AG04450 (cell line): ENCODE measurements at regions of chrX and their contacts with region 1.

Region 1: GRCh38 chrX:100768679-100769338 is 36.9 kb upstream of the SYTL4 start:
- DNase-seq: peak; percentile 10
- H3K4me3 ChIP-seq: no peak overlapping the region
- H3K27ac ChIP-seq: no peak overlapping the region
- H3K27me3 ChIP-seq: no peaks in the 10 kb centered on the region
- CTCF ChIP-seq: peak; percentile 99

Region 2: GRCh38 chrX:100512471-100512870 is 256.3 kb before region 1 on chrX:
- CTCF ChIA-PET with region 1: interaction called, 61 read pairs
- POLR2A ChIA-PET with region 1: no interaction called
- DNase-seq: no peak
- H3K4me3 ChIP-seq: no peak overlapping the region
- H3K27ac ChIP-seq: no peak overlapping the region
- H3K27me3 ChIP-seq: no peaks in the 10 kb centered on the region
- CTCF ChIP-seq: peak; percentile 49

Region 3: DNA sequence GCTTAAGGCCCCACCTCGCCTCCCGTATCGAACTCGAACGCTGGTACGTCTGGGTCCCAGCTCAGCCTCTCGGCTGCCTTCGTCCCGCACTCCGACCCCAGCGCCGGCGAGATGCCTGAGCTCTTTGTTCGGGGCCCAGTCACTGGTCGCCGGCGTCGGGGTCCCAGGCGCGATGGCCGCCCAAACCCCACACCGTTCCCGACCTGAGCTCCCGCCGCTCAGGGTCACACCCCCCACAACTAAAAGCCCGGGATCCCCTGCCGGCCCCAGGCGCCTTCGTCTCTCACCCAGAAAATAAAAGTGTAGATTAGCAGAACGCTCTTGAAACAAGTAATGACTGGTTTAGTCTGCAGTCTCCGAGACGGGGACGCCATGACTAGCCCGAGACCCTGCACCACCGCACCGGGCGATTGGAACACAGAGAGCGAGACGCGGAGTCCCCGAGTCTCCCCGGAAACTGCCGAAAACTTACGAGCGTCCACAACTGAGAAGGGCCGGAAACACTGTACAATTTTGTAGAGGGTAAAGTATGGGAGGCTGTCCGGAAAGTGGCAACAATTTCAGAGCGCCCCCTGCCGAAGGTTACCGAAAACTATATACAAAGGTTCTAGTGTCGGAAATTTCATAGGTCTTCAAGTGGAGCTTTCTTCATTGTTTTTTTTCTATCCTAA is 132.4 kb before region 1 on chrX and contains the start of gene TSPAN6:
- CTCF ChIA-PET with region 1: interaction called, 13 read pairs
- POLR2A ChIA-PET with region 1: no interaction called
- DNase-seq: peak; percentile 57
- H3K4me3 ChIP-seq: peak within 1 kb of the TSS; percentile 70
- H3K27ac ChIP-seq: no peak within 1 kb of the TSS
- H3K27me3 ChIP-seq: no peaks in the 10 kb centered on the region
- CTCF ChIP-seq: peak; percentile 60
- polyA plus RNA-seq, gene TSPAN6: 38.4 and 49.1 TPM in 2 replicates

Region 4: DNA sequence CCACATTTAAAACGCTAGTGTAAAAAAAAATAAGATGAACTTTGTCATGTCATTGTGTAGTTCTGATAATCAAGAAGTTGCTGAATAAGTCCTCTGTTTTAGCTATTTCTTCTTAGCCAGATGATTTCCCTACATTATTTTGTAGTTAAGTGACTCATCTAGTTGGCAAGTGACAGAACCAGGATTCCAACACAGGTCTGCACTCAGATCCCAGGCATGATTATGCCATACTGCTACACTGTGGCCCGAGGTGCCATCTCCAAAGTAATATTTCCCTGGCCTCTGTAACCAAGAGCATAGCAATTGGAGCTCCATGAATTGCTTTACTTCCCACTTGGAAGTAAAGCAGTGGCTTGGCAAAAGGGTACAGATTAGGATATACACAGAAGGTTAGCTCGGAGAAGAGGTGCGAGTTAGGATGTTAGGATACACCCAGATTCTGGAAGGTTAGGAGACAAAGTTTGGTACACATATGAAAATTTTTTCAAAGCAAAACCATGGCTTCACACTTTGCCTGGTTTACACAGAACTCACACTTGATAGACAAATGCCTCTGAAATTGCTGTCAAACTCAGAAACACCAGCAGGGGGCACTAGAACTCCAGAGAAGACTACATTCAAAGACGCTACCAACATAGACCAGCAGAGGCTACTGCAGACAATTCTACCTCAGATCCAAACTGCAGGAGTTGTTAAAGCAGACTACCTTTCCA is 83.4 kb before region 1 on chrX:
- CTCF ChIA-PET with region 1: interaction called, 229 read pairs
- POLR2A ChIA-PET with region 1: no interaction called
- DNase-seq: peak; percentile 37
- H3K4me3 ChIP-seq: no peak overlapping the region
- H3K27ac ChIP-seq: no peak overlapping the region
- H3K27me3 ChIP-seq: no peaks in the 10 kb centered on the region
- CTCF ChIP-seq: peak; percentile 83

Region 5: GRCh38 chrX:100720301-100720700 is 48.5 kb before region 1 on chrX:
- CTCF ChIA-PET with region 1: interaction called, 10 read pairs
- POLR2A ChIA-PET with region 1: no interaction called
- DNase-seq: no peak
- H3K4me3 ChIP-seq: no peak overlapping the region
- H3K27ac ChIP-seq: no peak overlapping the region
- H3K27me3 ChIP-seq: no peaks in the 10 kb centered on the region
- CTCF ChIP-seq: no peak